WTC11 (cell line): ENCODE measurements at regions of chr11 and their contacts with region 1.

Region 1: GRCh38 chr11:47213985-47214564 is 699 bp upstream of the DDB2 start:
- DNase-seq: peak; percentile 86
- ATAC-seq: peak; percentile 89
- H3K4me3 Mint-ChIP-seq: peak overlapping the region; percentile 97
- H3K27ac Mint-ChIP-seq: peak overlapping the region; percentile 100
- H3K4me1 Mint-ChIP-seq: peaks cover 29% of the 10 kb centered on the region
- H3K27me3 Mint-ChIP-seq: no peaks in the 10 kb centered on the region; the same call in 1 of the 2 replicates
- CTCF ChIP-seq: no peak

Region 2: GRCh38 chr11:47176328-47177228 is 37.5 kb before region 1 on chr11 and contains the start of gene ARFGAP2:
- CTCF ChIA-PET with region 1: interaction called, 57 read pairs
- POLR2A ChIA-PET with region 1: interaction called, 18 read pairs
- DNase-seq: peak; percentile 95
- ATAC-seq: peak; percentile 94
- H3K4me3 Mint-ChIP-seq: peak within 1 kb of the TSS; percentile 88
- H3K27ac Mint-ChIP-seq: peak within 1 kb of the TSS; percentile 98
- H3K4me1 Mint-ChIP-seq: peaks cover 16% of the 10 kb centered on the region
- H3K27me3 Mint-ChIP-seq: no peaks in the 10 kb centered on the region
- CTCF ChIP-seq: no peak
- total RNA-seq, gene ARFGAP2: 55.7 to 73.0 TPM (median 60.5 TPM) in 3 replicates

Region 3: DNA sequence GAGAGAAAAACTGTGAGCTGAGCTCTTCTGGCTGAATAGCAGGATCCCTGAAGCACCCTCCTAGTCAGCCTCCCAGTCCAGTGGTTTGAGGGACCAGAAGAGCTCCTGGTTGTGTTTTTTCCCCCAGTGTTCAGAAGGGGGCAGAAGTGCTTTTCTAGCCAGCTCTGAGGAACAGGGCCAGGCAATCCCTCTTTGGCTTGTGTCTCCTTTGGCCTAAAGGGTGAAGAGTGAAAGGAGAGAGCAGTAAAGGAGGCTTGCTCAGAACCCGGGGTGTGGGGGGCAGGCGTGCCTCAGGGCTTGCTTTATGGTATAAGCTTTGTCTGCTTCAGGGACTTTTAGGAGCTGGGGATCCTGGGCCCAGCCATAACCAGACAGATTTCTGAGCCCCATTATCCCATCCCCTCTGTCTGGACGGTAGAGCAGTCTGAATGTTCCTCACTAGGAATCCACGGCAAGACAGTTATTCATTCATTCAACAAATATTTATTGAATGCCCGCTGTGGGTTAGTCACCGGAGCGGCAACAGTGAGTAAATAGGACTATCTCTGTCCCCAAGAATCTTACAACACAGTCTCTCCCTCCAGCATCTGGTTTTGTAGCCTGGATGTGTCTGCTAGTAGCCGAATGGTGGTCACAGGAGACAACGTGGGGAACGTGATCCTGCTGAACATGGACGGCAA is 20.1 kb after region 1 on chr11:
- CTCF ChIA-PET with region 1: interaction called, 11 read pairs
- POLR2A ChIA-PET with region 1: interaction called, 9 read pairs
- DNase-seq: peak; percentile 22
- ATAC-seq: peak; percentile 86
- H3K4me3 Mint-ChIP-seq: no peak overlapping the region
- H3K27ac Mint-ChIP-seq: peak overlapping the region; percentile 75
- H3K4me1 Mint-ChIP-seq: peaks cover 3% of the 10 kb centered on the region; the same call in 1 of the 2 replicates
- H3K27me3 Mint-ChIP-seq: no peaks in the 10 kb centered on the region
- CTCF ChIP-seq: no peak

Region 4: DNA sequence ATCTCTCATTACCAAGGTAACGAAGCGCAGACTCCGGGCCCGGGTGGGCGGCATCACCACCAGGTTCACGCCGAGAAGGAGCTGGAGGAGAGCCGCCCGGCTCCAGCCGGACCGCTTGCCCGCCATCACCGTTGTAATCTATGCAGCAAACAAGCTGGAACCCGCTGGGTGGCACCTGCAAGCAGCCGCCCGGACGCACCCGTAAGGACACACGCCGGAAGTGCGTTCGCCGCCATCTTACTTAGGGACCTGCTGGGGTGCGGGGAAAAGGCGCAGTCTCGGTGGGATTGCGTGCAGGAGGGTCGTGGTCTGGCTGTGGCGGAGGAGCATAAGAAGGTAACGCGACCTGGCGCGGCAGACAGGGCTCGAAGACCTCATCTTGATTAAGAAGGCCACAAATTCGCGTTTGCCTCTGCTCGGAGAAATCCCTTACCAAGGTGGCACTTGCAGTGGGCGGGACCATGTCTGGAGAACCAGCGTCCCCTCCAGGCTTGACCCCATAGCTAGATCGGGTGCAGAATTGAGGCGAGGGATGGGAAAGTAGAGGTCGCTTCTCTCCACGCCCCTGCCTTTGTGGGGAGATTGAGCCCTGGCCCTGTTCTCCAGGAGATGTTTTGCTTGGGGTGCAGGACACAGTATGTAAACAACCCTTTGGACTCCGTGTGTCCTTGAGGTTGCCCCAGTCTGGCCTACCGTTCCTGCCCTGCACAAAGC is 34.7 kb after region 1 on chr11 and contains the start of gene ACP2:
- CTCF ChIA-PET with region 1: interaction called, 17 read pairs
- POLR2A ChIA-PET with region 1: interaction called, 27 read pairs
- DNase-seq: peak; percentile 91
- ATAC-seq: peak; percentile 93
- H3K4me3 Mint-ChIP-seq: peak within 1 kb of the TSS; percentile 98
- H3K27ac Mint-ChIP-seq: peak within 1 kb of the TSS; percentile 100
- H3K4me1 Mint-ChIP-seq: peaks cover 9% of the 10 kb centered on the region
- H3K27me3 Mint-ChIP-seq: no peaks in the 10 kb centered on the region
- CTCF ChIP-seq: no peak
- total RNA-seq, gene ACP2: 18.7 to 19.6 TPM (median 19.2 TPM) in 3 replicates